ENCODE measurements at regions of chr5 and their contacts with region 1.

Region 1: DNA sequence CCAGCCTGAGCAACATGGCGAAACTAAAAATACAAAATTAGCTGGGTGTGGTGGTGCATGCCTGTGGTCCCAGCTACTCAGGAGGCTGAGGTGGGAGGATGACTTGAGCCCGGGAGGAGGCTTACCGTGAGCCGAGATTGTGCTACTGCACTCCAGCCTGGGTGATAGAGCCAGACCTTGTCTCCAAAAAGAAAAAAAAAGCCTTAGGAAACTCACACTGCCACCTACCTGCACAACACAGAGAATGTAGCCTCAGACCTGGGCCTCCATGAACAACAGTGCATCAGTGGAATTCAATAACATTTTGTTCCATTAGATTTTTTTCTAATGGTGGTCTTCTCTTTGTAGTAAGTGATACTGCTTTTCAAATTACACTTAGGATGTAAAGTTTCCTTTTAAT is 63.8 kb upstream of the RARS1 start:
- DNase-seq: no peak
- H3K4me3 ChIP-seq: no peak overlapping the region
- H3K27ac ChIP-seq: no peak overlapping the region
- H3K4me1 ChIP-seq: no peaks in the 10 kb centered on the region
- H3K27me3 ChIP-seq: no peaks in the 10 kb centered on the region
- CTCF ChIP-seq: peak in 2 of 3 experiments; percentile 39; a peak in 2 of 4 replicates
- EP300 ChIP-seq: no peak
- POLR2A ChIP-seq: no peak
- RAD21 ChIP-seq: peak; percentile 52 to 58

Region 2: DNA sequence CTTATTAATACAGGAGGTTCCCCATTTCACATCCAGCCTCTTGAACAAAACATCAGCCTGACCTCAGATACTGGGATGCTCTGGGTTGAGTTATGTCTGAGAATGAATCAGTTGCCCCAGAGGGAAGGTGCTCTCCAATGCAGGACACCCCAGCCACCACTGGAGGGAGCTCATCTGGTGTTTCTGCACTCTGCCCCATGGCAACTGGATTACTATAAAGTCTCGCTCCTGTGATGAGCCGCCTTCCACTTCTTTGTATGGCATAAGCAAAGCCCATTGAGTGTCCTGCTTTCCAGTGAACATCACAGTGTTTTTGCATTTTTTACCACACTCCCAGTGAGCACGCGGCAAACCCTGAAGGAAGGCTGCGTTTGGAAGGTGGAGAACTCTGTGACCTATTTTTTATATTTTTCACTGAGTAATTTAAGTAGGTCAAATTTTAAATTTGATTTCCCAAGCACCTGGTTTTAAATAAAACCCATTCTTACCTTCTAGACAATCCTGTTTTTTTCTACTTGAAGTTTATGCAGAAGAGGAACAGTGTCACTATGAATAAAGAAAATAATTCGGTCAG is 307.9 kb before region 1 on chr5:
- CTCF ChIA-PET with region 1: no interaction called
- POLR2A ChIA-PET with region 1: no interaction called
- DNase-seq: peak; percentile 43 to 92
- H3K4me3 ChIP-seq: no peak overlapping the region
- H3K27ac ChIP-seq: no peak overlapping the region
- H3K4me1 ChIP-seq: peaks cover 3 to 9% (median 3%) of the 10 kb centered on the region in 4 experiments; a peak in 6 of 7 replicates
- H3K27me3 ChIP-seq: no peaks in the 10 kb centered on the region
- CTCF ChIP-seq: peak; percentile 88 to 98 (median 98)
- EP300 ChIP-seq: no peak
- POLR2A ChIP-seq: no peak
- RAD21 ChIP-seq: peak; percentile 87 to 90

Region 3: GRCh38 chr5:168409580-168410458 is 12.6 kb before region 1 on chr5:
- CTCF ChIA-PET with region 1: interaction called, 66 read pairs
- POLR2A ChIA-PET with region 1: no interaction called
- DNase-seq: no peak
- H3K4me3 ChIP-seq: no peak overlapping the region
- H3K27ac ChIP-seq: no peak overlapping the region
- H3K4me1 ChIP-seq: no peaks in the 10 kb centered on the region
- H3K27me3 ChIP-seq: no peaks in the 10 kb centered on the region
- CTCF ChIP-seq: no peak
- EP300 ChIP-seq: no peak
- POLR2A ChIP-seq: no peak
- RAD21 ChIP-seq: no peak

Region 4: DNA sequence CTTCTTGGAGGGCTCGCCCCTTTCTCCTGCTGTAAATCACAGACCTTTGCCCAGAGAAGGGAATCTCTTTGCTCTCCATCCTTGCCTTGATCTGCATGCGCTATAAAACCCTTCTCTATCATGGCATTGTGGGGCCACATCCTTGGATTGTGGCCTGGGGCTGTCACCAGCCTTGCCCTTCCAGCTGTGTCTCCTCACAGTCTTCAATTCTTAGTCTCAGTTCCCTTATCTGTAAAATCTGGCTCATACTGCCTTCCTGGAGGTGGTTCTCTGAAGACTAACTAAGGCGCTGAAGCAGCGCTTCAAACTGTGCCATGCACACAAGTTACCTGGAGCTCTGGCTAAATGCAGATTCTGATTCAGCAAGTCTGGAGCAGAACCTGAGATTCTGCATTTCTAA is 10.5 kb after region 1 on chr5:
- CTCF ChIA-PET with region 1: interaction called, 10 read pairs
- POLR2A ChIA-PET with region 1: no interaction called
- DNase-seq: no peak
- H3K4me3 ChIP-seq: no peak overlapping the region
- H3K27ac ChIP-seq: no peak overlapping the region
- H3K4me1 ChIP-seq: no peaks in the 10 kb centered on the region
- H3K27me3 ChIP-seq: no peaks in the 10 kb centered on the region
- CTCF ChIP-seq: no peak
- EP300 ChIP-seq: no peak
- POLR2A ChIP-seq: no peak
- RAD21 ChIP-seq: no peak

Region 5: GRCh38 chr5:168443950-168444700 is 21.7 kb after region 1 on chr5:
- CTCF ChIA-PET with region 1: no interaction called
- POLR2A ChIA-PET with region 1: no interaction called
- DNase-seq: no peak
- H3K4me3 ChIP-seq: no peak overlapping the region
- H3K27ac ChIP-seq: no peak overlapping the region
- H3K4me1 ChIP-seq: no peaks in the 10 kb centered on the region
- H3K27me3 ChIP-seq: no peaks in the 10 kb centered on the region
- CTCF ChIP-seq: no peak
- EP300 ChIP-seq: no peak
- POLR2A ChIP-seq: no peak
- RAD21 ChIP-seq: no peak

Measured in H1 (cell line).